BJ (cell line): ENCODE measurements at regions of chr1 and their contacts with region 1.

Region 1: GRCh38 chr1:66996018-66996682 is 57.8 kb downstream of the SLC35D1 start:
- DNase-seq: no peak
- H3K4me3 ChIP-seq: no peak overlapping the region
- H3K27me3 ChIP-seq: no peaks in the 10 kb centered on the region
- CTCF ChIP-seq: peak; percentile 84

Region 2: GRCh38 chr1:66916320-66916719 is 79.8 kb before region 1 on chr1:
- CTCF ChIA-PET with region 1: no interaction called
- POLR2A ChIA-PET with region 1: no interaction called
- DNase-seq: no peak
- H3K4me3 ChIP-seq: no peak overlapping the region
- H3K27me3 ChIP-seq: no peaks in the 10 kb centered on the region
- CTCF ChIP-seq: no peak

Region 3: DNA sequence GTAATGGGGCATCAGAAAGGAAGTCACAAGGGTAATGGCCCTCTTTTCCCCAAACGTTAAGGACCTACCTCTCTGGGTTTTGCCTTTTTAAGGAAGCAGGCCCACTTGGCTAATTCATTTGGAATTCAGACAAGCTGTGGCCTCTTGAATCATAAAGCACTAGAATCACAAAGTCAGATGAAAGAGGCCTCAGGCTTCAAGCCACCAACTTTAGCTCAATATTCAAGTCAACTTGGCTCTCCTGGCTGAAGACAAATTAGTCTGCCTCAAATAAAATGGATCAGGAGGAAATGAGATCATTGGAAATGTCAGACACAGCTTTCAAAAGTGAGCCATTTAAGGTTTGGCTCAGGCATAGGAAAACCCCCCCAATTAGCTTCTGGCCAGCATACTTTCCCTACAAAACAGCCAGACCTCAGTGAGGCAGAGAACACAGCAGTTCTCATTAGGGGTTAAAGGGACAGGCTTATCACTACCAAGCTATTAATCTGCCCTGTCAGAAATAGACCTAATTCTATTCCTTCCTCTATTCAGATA is 23.5 kb after region 1 on chr1:
- CTCF ChIA-PET with region 1: interaction called, 10 read pairs
- POLR2A ChIA-PET with region 1: no interaction called
- DNase-seq: peak; percentile 78
- H3K4me3 ChIP-seq: no peak overlapping the region
- H3K27me3 ChIP-seq: no peaks in the 10 kb centered on the region
- CTCF ChIP-seq: no peak

Region 4: GRCh38 chr1:67122392-67122791 is 126.2 kb after region 1 on chr1:
- CTCF ChIA-PET with region 1: no interaction called
- POLR2A ChIA-PET with region 1: no interaction called
- DNase-seq: no peak
- H3K4me3 ChIP-seq: no peak overlapping the region
- H3K27me3 ChIP-seq: no peaks in the 10 kb centered on the region
- CTCF ChIP-seq: no peak